ENCODE measurements at regions of chr5 and their contacts with region 1.

Region 1: DNA sequence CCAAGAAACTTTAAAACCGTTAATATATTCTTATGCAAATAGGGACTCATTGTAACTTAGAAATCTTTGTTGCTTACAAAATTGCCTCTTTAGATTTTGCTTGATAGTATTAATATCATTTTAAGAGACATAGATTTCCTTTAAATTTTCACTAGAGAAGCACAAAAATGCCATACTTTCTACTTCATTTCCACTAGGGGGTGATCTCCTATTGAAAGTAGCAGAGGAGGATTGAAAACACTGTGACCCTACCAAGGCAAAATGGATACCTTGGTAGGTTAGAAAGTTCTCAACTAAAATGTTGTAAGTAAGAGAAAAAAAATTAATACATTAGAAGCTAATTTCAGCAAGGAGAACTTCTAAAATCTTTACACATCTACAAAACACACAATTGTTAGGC is 204.9 kb downstream of the CHSY3 start:
- DNase-seq: no peak
- H3K4me3 Mint-ChIP-seq: no peak overlapping the region
- H3K27ac Mint-ChIP-seq: no peak overlapping the region
- H3K4me1 Mint-ChIP-seq: peaks cover 6% of the 10 kb centered on the region
- H3K27me3 Mint-ChIP-seq: no peaks in the 10 kb centered on the region

Region 2: DNA sequence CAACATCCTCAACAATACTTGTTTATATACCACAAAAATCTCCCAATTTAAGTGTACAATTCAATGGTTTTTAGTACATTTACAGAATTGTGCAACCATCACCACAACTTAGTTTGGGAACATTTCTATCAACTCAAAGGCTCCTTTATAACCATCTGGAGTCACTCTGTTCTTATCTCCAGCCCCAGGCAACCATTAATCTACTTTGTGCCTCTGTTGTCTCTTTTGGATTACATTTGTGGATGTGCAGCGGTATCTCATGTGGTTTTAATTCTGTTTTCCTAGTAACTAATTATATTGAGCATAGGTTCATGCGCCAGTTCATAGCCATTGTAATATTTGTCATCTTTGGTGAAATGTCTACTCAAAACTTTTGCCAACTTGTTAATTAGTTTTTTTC is 634.6 kb before region 1 on chr5:
- CTCF ChIA-PET with region 1: no interaction called
- intact Hi-C with region 1: no loop called
- DNase-seq: no peak
- H3K4me3 Mint-ChIP-seq: no peak overlapping the region
- H3K27ac Mint-ChIP-seq: no peak overlapping the region
- H3K4me1 Mint-ChIP-seq: no peaks in the 10 kb centered on the region
- H3K27me3 Mint-ChIP-seq: no peaks in the 10 kb centered on the region

Region 3: GRCh38 chr5:130066644-130067043 is 42.5 kb before region 1 on chr5:
- CTCF ChIA-PET with region 1: no interaction called
- intact Hi-C with region 1: no loop called
- DNase-seq: no peak
- H3K4me3 Mint-ChIP-seq: no peak overlapping the region
- H3K27ac Mint-ChIP-seq: no peak overlapping the region
- H3K4me1 Mint-ChIP-seq: no peaks in the 10 kb centered on the region
- H3K27me3 Mint-ChIP-seq: peaks cover 4% of the 10 kb centered on the region

Region 4: GRCh38 chr5:130720355-130720754 is 611.2 kb after region 1 on chr5:
- CTCF ChIA-PET with region 1: no interaction called
- intact Hi-C with region 1: loop called (anchors 5 kb)
- DNase-seq: no peak
- H3K4me3 Mint-ChIP-seq: no peak overlapping the region
- H3K27ac Mint-ChIP-seq: no peak overlapping the region
- H3K4me1 Mint-ChIP-seq: no peaks in the 10 kb centered on the region
- H3K27me3 Mint-ChIP-seq: peaks cover 8% of the 10 kb centered on the region